Colonic mucosa (tissue), 4 donors: ENCODE measurements at regions of chr7 and their contacts with region 1.

Region 1: DNA sequence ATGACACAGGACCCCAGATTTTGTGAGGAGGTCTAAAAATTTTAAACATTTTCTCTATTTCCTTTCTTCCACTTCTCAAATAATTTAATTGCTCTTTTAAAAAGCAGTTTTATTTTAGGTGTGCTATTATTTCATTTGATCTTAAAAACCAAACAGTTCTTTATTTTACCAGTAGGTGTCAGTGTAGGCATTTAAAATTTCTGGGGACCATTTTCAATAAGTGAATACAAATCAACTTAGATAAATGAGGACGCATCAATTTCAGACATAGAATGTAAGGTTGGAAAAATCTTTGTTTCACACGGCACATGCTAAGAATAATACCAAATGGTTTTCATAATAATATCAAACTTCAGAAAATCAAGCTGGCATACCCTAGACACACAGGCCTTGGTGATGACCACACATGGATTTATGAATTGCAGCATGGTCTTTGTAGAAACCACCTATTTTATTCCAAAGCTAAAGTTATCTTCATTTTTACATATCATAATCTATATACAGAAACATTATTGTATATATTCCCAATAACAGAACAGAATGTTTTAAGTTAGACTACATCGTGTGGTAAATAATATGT is 127.6 kb upstream of the SLC26A5 start:
- DNase-seq: no peak
- H3K4me3 ChIP-seq: no peak overlapping the region
- H3K27ac ChIP-seq: no peak overlapping the region
- H3K4me1 ChIP-seq: no peaks in the 10 kb centered on the region
- H3K27me3 ChIP-seq: no peaks in the 10 kb centered on the region
- CTCF ChIP-seq: peak; percentile 55

Region 2: GRCh38 chr7:104156842-104157277 is 583.3 kb after region 1 on chr7:
- intact Hi-C with region 1: loop called (anchors 5 kb)
- DNase-seq: no peak
- H3K4me3 ChIP-seq: no peak overlapping the region
- H3K27ac ChIP-seq: no peak overlapping the region
- H3K4me1 ChIP-seq: no peaks in the 10 kb centered on the region
- H3K27me3 ChIP-seq: no peaks in the 10 kb centered on the region
- CTCF ChIP-seq: peak; percentile 28